Activated naive CD4-positive, alpha-beta T cell treated with anti-CD3 and anti-CD28 coated beads for 36 hours (primary cell): ENCODE measurements at regions of chrX and their contacts with region 1.

Region 1: DNA sequence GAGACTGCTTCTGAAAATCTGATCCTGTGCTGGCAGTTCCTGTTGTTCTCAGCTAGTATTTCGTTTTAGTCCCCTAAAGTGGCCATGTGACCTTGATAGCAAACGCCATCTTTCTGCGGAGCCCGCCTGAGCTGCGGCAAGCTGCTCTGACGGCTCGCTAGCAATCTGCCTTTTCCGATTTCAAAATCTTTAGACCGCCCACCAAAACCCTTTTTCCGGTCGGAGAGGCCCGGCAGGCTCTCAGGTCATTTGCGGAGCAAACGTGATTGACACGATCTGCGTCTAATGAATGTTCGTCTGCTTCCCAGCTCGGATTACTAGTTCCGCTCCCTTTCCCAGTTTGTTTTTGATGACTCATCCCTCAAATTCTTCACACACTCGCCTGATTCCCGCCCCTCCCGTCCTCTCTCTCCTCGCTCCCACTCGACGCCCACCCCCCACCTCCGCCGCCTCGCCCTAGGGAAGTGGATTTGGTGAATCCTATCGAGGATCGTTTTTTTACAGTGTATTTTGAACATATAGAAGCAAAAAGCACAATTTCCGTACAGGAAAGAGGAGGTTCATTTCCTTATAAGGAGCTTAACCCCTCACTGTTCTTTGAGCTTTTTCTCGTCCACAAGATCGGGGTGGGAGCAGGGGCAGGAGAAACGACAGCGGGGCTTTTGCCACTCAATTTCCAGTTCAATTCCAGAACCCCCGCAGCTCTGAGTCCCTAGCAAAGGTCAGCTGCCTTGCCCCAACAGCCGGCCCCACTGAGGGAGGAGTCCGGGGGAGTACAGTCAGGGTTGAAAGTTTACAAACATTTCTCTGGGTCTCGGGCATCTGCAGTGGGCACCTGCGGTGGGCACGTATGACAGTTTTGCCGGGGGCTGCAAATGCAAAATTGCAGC is 37.5 kb downstream of the NLGN3 start:
- DNase-seq: peak; percentile 91
- H3K4me3 Mint-ChIP-seq: peak overlapping the region; percentile 90
- H3K27ac Mint-ChIP-seq: peak overlapping the region; percentile 99
- H3K4me1 Mint-ChIP-seq: peaks cover 18% of the 10 kb centered on the region
- H3K27me3 Mint-ChIP-seq: no peaks in the 10 kb centered on the region

Region 2: DNA sequence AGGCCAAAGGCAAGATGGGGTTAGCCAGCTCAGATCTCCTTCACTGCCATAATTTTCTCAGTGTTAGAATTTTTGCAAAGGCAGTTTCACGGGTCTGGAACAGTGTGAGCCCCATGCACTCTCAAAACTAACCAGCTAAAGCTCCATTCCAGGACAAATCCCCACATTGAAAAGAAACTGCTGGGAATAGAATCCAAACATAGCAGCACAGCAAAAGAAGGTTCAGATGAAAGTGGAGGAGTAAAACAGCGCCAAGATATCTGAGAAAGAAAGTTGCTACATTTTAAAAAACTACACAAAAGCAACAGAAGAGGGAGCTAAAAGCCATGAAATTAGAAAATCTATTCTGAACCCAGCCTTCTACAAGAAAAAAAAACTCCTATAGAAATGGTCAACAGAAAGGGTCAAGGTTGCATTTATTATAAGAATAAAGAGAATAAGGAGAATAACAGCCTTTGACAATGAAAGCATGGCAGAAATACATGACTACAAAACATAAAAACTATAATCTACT is 211.6 kb before region 1 on chrX:
- CTCF ChIA-PET with region 1: interaction called, 7 read pairs
- intact Hi-C with region 1: loop called (anchors 1 kb)
- DNase-seq: no peak
- H3K4me3 Mint-ChIP-seq: no peak overlapping the region
- H3K27ac Mint-ChIP-seq: no peak overlapping the region
- H3K4me1 Mint-ChIP-seq: peaks cover 4% of the 10 kb centered on the region
- H3K27me3 Mint-ChIP-seq: no peaks in the 10 kb centered on the region

Region 3: DNA sequence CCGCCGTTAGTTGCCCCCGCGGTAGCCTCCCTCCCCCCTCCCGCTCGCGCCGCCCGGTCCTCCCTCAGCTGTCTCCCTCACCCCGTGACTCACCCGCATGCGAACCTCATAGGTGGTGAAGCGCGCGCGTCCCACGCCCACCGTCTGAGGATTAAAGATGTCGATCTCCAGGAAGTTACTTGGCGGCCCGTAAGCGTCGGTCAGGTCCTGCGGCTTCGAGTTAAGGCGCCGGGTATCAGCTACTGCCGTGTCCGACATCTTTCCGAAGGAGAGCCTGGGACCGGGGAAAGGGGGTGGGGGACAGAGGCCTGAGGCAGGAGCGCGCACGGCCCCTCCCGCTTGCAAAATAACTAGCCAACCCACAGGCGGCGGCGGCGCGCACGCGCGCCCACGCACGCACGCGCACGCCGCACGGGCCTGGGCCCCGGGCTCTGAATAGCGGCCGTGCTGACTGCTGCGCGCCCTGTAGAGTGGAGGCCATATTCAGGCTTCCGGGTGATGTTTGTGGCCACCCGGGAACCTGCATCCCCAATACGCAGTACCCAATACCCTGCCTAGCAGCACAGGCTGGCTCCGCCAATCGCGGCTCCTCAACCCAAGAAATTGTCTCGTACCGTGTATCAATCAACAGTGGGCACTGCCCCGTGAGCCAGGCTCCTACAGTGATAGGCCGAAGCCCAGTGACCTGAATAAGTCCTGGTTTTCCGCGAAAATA is 113.9 kb before region 1 on chrX and contains the start of gene SNX12:
- CTCF ChIA-PET with region 1: no interaction called
- intact Hi-C with region 1: loop called (anchors 1 kb)
- DNase-seq: peak; percentile 93
- H3K4me3 Mint-ChIP-seq: peak within 1 kb of the TSS; percentile 96
- H3K27ac Mint-ChIP-seq: peak within 1 kb of the TSS; percentile 94
- H3K4me1 Mint-ChIP-seq: peaks cover 19% of the 10 kb centered on the region
- H3K27me3 Mint-ChIP-seq: no peaks in the 10 kb centered on the region
- total RNA-seq, gene SNX12: 32.9 to 35.2 TPM

Region 4: GRCh38 chrX:71111141-71111843 is 70.9 kb before region 1 on chrX and contains the start of gene IL2RG:
- CTCF ChIA-PET with region 1: interaction called, 3 read pairs
- intact Hi-C with region 1: loop called (anchors 5 kb)
- DNase-seq: peak; percentile 87
- H3K4me3 Mint-ChIP-seq: peak within 1 kb of the TSS; percentile 93
- H3K27ac Mint-ChIP-seq: peak within 1 kb of the TSS; percentile 95
- H3K4me1 Mint-ChIP-seq: peaks cover 37% of the 10 kb centered on the region
- H3K27me3 Mint-ChIP-seq: no peaks in the 10 kb centered on the region
- total RNA-seq, gene IL2RG: 144 to 148 TPM

Region 5: DNA sequence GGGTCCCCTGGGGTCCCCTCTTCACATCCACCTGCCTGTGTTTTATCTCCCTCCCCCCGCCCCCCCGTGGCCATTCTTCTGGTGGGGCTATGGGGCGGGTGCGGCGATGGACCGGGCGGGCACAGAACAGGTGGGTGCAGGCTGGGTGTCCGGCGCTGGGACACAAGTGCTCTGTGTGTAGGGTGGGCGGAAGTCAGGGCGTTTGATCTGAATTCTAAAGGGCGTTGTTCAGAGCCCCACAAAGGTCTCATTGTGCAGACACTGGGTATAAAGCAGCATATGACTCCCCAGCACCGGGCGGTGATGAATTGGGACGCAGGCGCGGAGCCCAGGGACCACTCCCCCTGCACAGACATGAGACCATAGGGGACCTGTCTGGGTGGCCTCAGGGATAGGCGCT is 40.8 kb after region 1 on chrX and contains the start of gene GJB1:
- CTCF ChIA-PET with region 1: no interaction called
- intact Hi-C with region 1: no loop called
- DNase-seq: no peak
- H3K4me3 Mint-ChIP-seq: no peak within 1 kb of the TSS
- H3K27ac Mint-ChIP-seq: no peak within 1 kb of the TSS
- H3K4me1 Mint-ChIP-seq: no peaks in the 10 kb centered on the region
- H3K27me3 Mint-ChIP-seq: no peaks in the 10 kb centered on the region
- total RNA-seq, gene GJB1: not detected

Region 6: GRCh38 chrX:71254092-71254941 is 72.2 kb after region 1 on chrX and contains the start of gene ZMYM3:
- CTCF ChIA-PET with region 1: interaction called, 4 read pairs
- intact Hi-C with region 1: loop called (anchors 1 kb)
- DNase-seq: peak; percentile 70
- H3K4me3 Mint-ChIP-seq: peak within 1 kb of the TSS; percentile 87
- H3K27ac Mint-ChIP-seq: peak within 1 kb of the TSS; percentile 76
- H3K4me1 Mint-ChIP-seq: peaks cover 29% of the 10 kb centered on the region
- H3K27me3 Mint-ChIP-seq: no peaks in the 10 kb centered on the region
- total RNA-seq, gene ZMYM3: 7.7 to 8.2 TPM

Region 7: DNA sequence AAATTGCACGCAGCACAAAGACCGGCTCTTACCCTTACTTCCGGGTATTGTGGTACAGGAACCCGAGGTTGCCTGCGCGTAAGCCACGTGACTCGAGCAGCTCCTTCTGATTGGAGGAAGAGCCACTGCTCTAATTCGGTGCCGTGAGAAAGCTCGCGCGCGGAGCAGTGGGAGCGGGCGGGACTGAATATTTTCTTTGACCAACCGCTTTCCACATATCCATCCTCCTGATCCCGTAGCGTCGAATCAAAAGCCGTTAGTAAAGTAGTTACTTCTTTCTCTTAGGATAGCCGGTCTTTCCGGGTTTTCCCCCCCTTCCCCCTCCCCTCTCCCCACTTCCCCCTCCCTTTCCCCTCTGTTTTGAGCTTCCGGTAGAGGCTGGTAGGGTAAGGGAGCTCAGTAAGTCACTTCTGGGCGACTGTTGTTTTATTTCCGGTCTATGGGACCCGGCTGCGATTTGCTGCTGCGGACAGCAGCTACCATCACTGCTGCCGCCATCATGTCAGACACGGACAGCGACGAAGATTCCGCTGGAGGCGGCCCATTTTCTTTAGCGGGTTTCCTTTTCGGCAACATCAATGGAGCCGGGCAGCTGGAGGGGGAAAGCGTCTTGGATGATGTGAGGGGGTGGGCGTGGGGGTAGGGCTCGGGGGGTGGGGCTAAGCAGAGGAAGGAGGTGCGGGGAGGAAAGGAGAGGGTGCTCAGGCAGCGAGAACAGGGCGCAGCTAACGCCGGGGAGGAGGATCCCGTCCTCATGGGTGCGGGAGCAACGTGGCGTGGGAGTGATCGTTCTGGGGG is 183.9 kb after region 1 on chrX and contains the start of gene TAF1:
- CTCF ChIA-PET with region 1: no interaction called
- intact Hi-C with region 1: loop called (anchors 1 kb)
- DNase-seq: peak; percentile 96
- H3K4me3 Mint-ChIP-seq: peak within 1 kb of the TSS; percentile 98
- H3K27ac Mint-ChIP-seq: peak within 1 kb of the TSS; percentile 99
- H3K4me1 Mint-ChIP-seq: peaks cover 25% of the 10 kb centered on the region
- H3K27me3 Mint-ChIP-seq: no peaks in the 10 kb centered on the region
- total RNA-seq, gene TAF1: 24.0 to 27.2 TPM

Region 8: GRCh38 chrX:71622576-71623450 is 440.7 kb after region 1 on chrX:
- CTCF ChIA-PET with region 1: no interaction called
- intact Hi-C with region 1: loop called (anchors 2 kb)
- DNase-seq: peak; percentile 88
- H3K4me3 Mint-ChIP-seq: peak overlapping the region; percentile 26
- H3K27ac Mint-ChIP-seq: peak overlapping the region; percentile 86
- H3K4me1 Mint-ChIP-seq: peaks cover 59% of the 10 kb centered on the region
- H3K27me3 Mint-ChIP-seq: no peaks in the 10 kb centered on the region